MCF 10A (cell line): ENCODE measurements at regions of chr17 and their contacts with region 1.

Region 1: DNA sequence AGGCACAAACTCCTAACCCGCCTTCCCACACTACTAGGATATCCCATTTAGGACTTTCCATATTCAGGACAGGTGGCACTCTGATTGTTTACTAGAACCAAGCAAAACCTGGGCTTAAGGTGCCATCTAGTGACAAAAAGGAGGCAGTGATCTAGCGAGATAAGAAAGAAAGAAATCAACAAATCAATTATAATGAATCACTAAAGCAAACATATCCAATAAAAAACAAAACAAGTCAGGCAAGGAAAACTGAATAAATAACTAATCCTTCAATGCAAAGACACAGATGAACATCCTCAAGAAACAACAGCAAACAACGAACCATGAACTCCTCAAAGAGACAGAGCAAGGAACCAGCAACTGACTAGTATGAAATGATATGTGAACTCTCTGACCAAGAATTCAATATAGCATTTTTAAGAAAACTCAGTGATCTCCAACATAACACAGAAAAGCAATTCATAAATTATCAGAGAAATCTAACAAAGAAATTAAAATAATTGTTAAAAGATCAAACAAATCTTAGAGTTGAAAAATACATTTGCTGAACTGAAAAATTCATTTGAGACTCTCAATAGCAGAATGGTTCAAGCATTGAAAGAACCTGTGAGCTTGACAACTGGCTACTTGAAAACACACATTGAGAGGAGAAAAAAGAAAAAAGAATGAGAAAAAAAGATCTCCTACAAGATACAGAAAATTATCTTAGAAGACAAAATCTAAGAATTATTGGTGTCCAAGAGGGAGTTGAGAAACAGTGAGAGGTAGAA is 203.7 kb downstream of the CEP112 start:
- DNase-seq: peak; percentile 57
- H3K4me3 Mint-ChIP-seq: no peak overlapping the region
- H3K27ac Mint-ChIP-seq: no peak overlapping the region
- H3K4me1 Mint-ChIP-seq: peaks cover 17% of the 10 kb centered on the region
- H3K27me3 Mint-ChIP-seq: no peaks in the 10 kb centered on the region
- CTCF ChIP-seq: peak; percentile 70

Region 2: GRCh38 chr17:65294179-65294720 is 694.0 kb before region 1 on chr17:
- CTCF ChIA-PET with region 1: interaction called, 15 read pairs
- POLR2A ChIA-PET with region 1: no interaction called
- intact Hi-C with region 1: loop called (anchors 1 kb)
- DNase-seq: peak; percentile 75
- H3K4me3 Mint-ChIP-seq: no peak overlapping the region
- H3K27ac Mint-ChIP-seq: no peak overlapping the region
- H3K4me1 Mint-ChIP-seq: peaks cover 6% of the 10 kb centered on the region
- H3K27me3 Mint-ChIP-seq: no peaks in the 10 kb centered on the region
- CTCF ChIP-seq: peak; percentile 67

Region 3: DNA sequence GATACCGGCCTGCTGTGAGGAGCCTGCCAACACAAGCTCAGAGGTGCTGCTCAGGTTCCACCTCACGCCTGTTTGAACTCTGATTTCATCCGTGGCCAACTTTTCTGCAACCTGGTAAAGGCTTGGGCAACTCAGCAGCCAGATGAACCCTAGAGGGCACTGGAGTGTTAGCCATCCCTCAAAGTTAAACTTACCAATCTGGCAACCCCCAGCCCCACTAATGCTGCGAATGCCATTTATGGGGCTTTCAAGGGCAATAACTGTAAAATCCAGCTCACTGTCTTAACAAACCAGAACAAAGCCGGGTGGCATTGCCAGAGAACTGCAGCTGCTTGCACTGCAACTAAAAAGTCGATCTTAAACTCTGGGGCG is 532.3 kb before region 1 on chr17:
- CTCF ChIA-PET with region 1: no interaction called
- POLR2A ChIA-PET with region 1: no interaction called
- intact Hi-C with region 1: loop called (anchors 5 kb)
- DNase-seq: peak; percentile 30
- H3K4me3 Mint-ChIP-seq: no peak overlapping the region
- H3K27ac Mint-ChIP-seq: no peak overlapping the region
- H3K4me1 Mint-ChIP-seq: peaks cover 8% of the 10 kb centered on the region
- H3K27me3 Mint-ChIP-seq: no peaks in the 10 kb centered on the region
- CTCF ChIP-seq: no peak

Region 4: DNA sequence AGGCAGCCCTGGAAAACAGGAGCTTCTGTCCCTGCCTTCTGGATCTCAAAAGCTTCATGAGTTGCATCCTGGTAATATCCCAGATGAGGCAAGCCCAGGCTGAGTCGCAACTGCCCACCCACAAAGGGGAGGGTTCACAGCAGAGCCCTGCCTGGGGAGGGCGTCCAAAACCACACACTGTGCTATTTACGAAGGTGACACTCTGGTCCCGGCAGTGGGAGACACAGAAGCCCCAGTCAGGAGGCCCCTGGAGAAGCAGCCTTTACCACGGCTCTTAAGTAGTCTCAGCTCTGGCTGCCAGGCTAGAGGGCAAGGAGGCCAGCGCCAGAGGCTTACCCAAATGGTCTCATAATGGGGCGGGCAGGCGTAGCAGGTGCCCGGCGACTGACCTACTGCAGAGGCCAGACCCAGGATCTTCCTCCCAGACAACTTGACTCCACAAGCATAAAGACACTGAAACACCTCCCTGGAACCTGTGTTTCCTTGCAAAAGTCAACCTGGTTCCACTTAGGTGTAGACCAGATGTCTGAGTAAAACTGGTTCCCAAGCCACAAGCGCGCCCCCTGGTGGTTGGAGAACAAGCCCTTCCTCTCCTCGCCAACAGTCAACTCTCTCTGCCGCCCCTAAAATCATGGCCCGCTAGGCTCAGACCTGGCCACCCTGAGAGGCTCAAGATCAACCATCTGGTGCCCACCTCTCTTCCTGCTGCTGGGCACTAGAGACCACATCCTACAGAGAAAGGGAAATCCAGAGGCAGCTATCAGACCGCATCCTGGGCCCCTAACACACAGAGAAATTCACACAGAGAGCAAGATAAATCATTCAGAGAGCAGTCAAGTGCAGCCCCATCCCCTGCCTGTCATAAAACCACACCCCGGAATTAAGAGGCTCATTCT is 432.0 kb before region 1 on chr17:
- CTCF ChIA-PET with region 1: interaction called, 4 read pairs
- POLR2A ChIA-PET with region 1: no interaction called
- intact Hi-C with region 1: loop called (anchors 1 kb)
- DNase-seq: peak; percentile 78
- H3K4me3 Mint-ChIP-seq: no peak overlapping the region
- H3K27ac Mint-ChIP-seq: no peak overlapping the region
- H3K4me1 Mint-ChIP-seq: no peaks in the 10 kb centered on the region
- H3K27me3 Mint-ChIP-seq: peaks cover 10% of the 10 kb centered on the region
- CTCF ChIP-seq: peak; percentile 84

Region 5: GRCh38 chr17:65561394-65562205 is 426.7 kb before region 1 on chr17 and contains the start of gene AXIN2:
- CTCF ChIA-PET with region 1: interaction called, 4 read pairs
- POLR2A ChIA-PET with region 1: no interaction called
- intact Hi-C with region 1: loop called (anchors 1 kb)
- DNase-seq: peak; percentile 83
- H3K4me3 Mint-ChIP-seq: peak within 1 kb of the TSS; percentile 80
- H3K27ac Mint-ChIP-seq: peak within 1 kb of the TSS; percentile 25
- H3K4me1 Mint-ChIP-seq: no peaks in the 10 kb centered on the region
- H3K27me3 Mint-ChIP-seq: peaks cover 10% of the 10 kb centered on the region
- CTCF ChIP-seq: no peak
- total RNA-seq, gene AXIN2: 0.16 and 0.52 TPM in 2 replicates

Region 6: GRCh38 chr17:65794572-65794971 is 193.7 kb before region 1 on chr17:
- CTCF ChIA-PET with region 1: no interaction called
- POLR2A ChIA-PET with region 1: no interaction called
- intact Hi-C with region 1: loop called (anchors 10 kb)
- DNase-seq: peak; percentile 65
- H3K4me3 Mint-ChIP-seq: no peak overlapping the region
- H3K27ac Mint-ChIP-seq: no peak overlapping the region
- H3K4me1 Mint-ChIP-seq: no peaks in the 10 kb centered on the region
- H3K27me3 Mint-ChIP-seq: no peaks in the 10 kb centered on the region
- CTCF ChIP-seq: peak; percentile 64

Region 7: GRCh38 chr17:66165513-66166123 is 177.4 kb after region 1 on chr17:
- CTCF ChIA-PET with region 1: interaction called, 3 read pairs
- POLR2A ChIA-PET with region 1: no interaction called
- intact Hi-C with region 1: loop called (anchors 5 kb)
- DNase-seq: peak; percentile 61
- H3K4me3 Mint-ChIP-seq: no peak overlapping the region
- H3K27ac Mint-ChIP-seq: no peak overlapping the region
- H3K4me1 Mint-ChIP-seq: no peaks in the 10 kb centered on the region
- H3K27me3 Mint-ChIP-seq: no peaks in the 10 kb centered on the region
- CTCF ChIP-seq: peak; percentile 75